GM12878 (cell line): ENCODE measurements at regions of chr1 and their contacts with region 1.

Region 1: GRCh38 chr1:212814537-212815334 is 23.0 kb downstream of the TATDN3 start:
- DNase-seq: no peak
- ATAC-seq: no peak
- H3K4me3 ChIP-seq: no peak overlapping the region
- H3K27ac ChIP-seq: no peak overlapping the region
- H3K4me1 ChIP-seq: no peaks in the 10 kb centered on the region; the same call in 1 of the 2 replicates
- H3K27me3 ChIP-seq: no peaks in the 10 kb centered on the region
- CTCF ChIP-seq: peak; percentile 30 to 44 (median 36); a peak in 4 of 6 replicates
- EP300 ChIP-seq: no peak
- POLR2A ChIP-seq: no peak
- RAD21 ChIP-seq: peak; percentile 60

Region 2: DNA sequence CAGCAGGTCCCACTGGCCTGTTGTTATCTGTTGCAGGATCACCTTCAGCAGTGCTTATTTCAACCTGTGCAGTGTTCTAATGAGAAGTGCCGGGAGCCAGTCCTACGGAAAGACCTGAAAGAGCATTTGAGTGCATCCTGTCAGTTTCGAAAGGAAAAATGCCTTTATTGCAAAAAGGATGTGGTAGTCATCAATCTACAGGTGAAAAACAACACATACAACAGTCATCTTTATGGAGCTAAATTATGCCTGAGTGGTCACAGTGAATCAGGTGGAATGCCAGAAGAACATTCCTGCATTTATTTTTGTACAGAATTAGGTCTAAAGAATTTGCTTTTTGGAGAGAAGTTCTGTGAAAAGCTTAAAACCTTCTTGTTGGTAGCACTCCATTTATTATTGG is 1454.9 kb before region 1 on chr1:
- CTCF ChIA-PET with region 1: no interaction called
- POLR2A ChIA-PET with region 1: no interaction called
- RAD21 ChIA-PET with region 1: no interaction called
- SMC1A ChIA-PET with region 1: no interaction called
- in situ Hi-C with region 1: no loop called
- intact Hi-C with region 1: no loop called
- DNase-seq: no peak
- ATAC-seq: no peak
- H3K4me3 ChIP-seq: no peak overlapping the region
- H3K27ac ChIP-seq: no peak overlapping the region
- H3K4me1 ChIP-seq: no peaks in the 10 kb centered on the region
- H3K27me3 ChIP-seq: no peaks in the 10 kb centered on the region
- CTCF ChIP-seq: no peak
- EP300 ChIP-seq: no peak
- POLR2A ChIP-seq: no peak
- RAD21 ChIP-seq: no peak

Region 3: DNA sequence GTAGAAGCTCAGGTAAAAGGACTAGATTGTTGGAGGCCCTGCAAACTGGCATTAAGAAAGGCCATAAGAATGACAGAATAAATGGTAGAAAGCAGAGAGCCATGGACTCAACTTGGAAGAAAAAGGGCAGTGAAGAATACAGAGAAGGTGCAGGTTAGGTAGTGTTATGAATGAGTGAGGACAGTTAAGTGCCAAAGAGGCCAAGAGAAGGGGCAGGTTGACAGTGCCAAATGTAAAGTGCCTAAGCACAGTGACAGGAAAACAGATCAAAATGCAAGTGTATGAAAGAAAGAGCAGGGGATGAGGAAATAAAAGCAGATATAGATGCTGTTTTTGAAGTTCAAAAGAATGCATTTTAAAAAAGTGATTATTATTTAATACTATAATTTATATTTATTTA is 823.0 kb before region 1 on chr1:
- CTCF ChIA-PET with region 1: no interaction called
- POLR2A ChIA-PET with region 1: no interaction called
- RAD21 ChIA-PET with region 1: no interaction called
- SMC1A ChIA-PET with region 1: no interaction called
- in situ Hi-C with region 1: no loop called
- intact Hi-C with region 1: no loop called
- DNase-seq: no peak
- ATAC-seq: no peak
- H3K4me3 ChIP-seq: no peak overlapping the region
- H3K27ac ChIP-seq: no peak overlapping the region
- H3K4me1 ChIP-seq: peaks cover 2% of the 10 kb centered on the region
- H3K27me3 ChIP-seq: no peaks in the 10 kb centered on the region
- CTCF ChIP-seq: no peak
- EP300 ChIP-seq: no peak
- POLR2A ChIP-seq: no peak
- RAD21 ChIP-seq: no peak

Region 4: DNA sequence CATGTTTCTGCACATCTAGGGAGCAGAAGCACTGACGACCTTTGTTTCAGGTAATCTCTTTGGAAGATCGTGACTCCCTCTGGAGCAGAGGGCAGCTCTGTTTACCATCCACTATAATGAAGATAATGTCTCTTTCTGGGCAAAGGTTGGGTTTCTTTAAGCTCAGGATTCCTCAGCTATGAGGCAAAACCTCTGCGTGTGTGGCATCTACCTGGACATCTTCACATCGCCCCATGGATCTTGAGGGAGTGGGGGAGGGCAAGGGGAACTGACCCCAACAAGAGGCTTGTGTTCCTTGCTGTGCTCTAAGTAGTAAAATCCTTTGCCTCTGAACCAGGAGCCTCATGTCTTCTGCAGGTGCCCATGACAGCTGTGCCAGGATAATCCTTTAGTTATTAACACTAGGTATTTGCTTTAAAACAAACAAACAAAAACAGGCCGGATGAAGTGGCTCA is 13.1 kb after region 1 on chr1:
- CTCF ChIA-PET with region 1: interaction called, 10 read pairs
- POLR2A ChIA-PET with region 1: interaction called, 24 read pairs
- RAD21 ChIA-PET with region 1: interaction called, 35 read pairs
- SMC1A ChIA-PET with region 1: interaction called, 55 read pairs
- in situ Hi-C with region 1: no loop called
- intact Hi-C with region 1: no loop called
- DNase-seq: no peak
- ATAC-seq: no peak
- H3K4me3 ChIP-seq: no peak overlapping the region
- H3K27ac ChIP-seq: no peak overlapping the region
- H3K4me1 ChIP-seq: peaks cover 7% of the 10 kb centered on the region
- H3K27me3 ChIP-seq: no peaks in the 10 kb centered on the region
- CTCF ChIP-seq: no peak
- EP300 ChIP-seq: no peak
- POLR2A ChIP-seq: no peak
- RAD21 ChIP-seq: no peak

Region 5: DNA sequence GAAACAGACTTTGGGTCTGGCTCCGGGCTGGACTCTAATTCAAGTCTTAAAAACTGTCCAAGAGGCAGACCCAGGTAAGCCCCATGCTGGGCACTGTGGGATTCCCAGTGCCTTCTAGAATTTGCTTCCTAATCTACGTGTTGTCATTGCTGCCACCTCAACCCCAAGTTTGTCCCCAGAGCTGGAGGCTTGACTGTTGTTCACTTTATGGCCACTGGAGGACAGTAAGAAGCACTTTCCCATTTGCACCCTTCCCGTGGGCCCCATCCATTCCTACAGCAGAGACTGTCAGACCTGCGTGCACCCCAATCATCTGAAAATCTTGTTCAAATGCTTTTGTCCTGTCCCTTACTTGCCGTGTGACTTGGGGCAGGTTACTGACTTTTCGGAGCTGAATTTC is 106.2 kb after region 1 on chr1:
- CTCF ChIA-PET with region 1: interaction called, 9 read pairs
- POLR2A ChIA-PET with region 1: no interaction called
- RAD21 ChIA-PET with region 1: interaction called, 4 read pairs
- SMC1A ChIA-PET with region 1: interaction called, 6 read pairs
- in situ Hi-C with region 1: no loop called
- intact Hi-C with region 1: loop called (anchors 5 kb)
- DNase-seq: no peak
- ATAC-seq: peak; percentile 51
- H3K4me3 ChIP-seq: no peak overlapping the region
- H3K27ac ChIP-seq: no peak overlapping the region
- H3K4me1 ChIP-seq: peaks cover 20% of the 10 kb centered on the region
- H3K27me3 ChIP-seq: no peaks in the 10 kb centered on the region
- CTCF ChIP-seq: peak; percentile 45 to 67 (median 57); a peak in 5 of 6 replicates
- EP300 ChIP-seq: no peak
- POLR2A ChIP-seq: no peak
- RAD21 ChIP-seq: peak; percentile 71

Region 6: DNA sequence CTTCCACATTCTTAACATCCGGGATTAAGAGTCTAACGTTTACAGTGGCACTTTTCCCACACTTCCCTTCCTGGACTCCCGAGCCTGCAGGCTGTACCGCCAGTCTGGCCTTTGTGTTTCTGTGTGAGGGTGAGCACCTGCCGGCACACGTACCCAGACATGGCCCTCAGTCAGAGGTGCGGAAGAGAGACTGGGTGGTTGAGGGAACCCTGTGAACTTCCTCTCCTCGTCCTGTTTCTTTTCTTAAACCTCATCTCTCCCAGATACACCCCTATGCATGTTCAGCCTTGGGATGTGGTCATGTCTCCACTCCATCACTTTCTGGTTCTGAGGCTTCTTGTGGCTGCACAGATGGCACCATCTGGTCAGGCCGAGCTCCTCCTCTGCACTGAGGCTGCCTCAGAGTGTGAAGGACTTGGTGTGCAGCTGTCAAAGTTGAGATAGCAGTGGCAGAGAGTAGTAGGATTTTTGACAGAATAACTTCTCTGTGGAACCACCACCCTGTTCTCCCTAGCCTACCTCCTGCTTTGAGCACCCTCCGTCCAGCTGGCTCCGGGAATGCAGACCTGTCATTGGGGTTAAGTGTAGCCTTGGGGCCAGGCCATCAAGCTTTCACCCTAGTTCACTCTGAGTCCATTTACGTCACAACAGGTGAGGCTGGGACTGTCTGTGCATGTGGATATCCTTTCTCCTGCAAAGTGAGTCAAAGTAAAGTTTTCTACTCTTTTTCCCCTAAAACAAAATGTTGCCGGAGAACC is 167.0 kb after region 1 on chr1:
- CTCF ChIA-PET with region 1: interaction called, 19 read pairs
- POLR2A ChIA-PET with region 1: interaction called, 6 read pairs
- RAD21 ChIA-PET with region 1: interaction called, 8 read pairs
- SMC1A ChIA-PET with region 1: interaction called, 8 read pairs
- in situ Hi-C with region 1: no loop called
- intact Hi-C with region 1: no loop called
- DNase-seq: peak; percentile 93
- ATAC-seq: peak; percentile 47
- H3K4me3 ChIP-seq: no peak overlapping the region
- H3K27ac ChIP-seq: peak overlapping the region; percentile 93
- H3K4me1 ChIP-seq: peaks cover 56% of the 10 kb centered on the region
- H3K27me3 ChIP-seq: no peaks in the 10 kb centered on the region
- CTCF ChIP-seq: no peak
- EP300 ChIP-seq: no peak; a peak in 1 of 4 replicates
- POLR2A ChIP-seq: peak; percentile 65
- RAD21 ChIP-seq: no peak

Region 7: DNA sequence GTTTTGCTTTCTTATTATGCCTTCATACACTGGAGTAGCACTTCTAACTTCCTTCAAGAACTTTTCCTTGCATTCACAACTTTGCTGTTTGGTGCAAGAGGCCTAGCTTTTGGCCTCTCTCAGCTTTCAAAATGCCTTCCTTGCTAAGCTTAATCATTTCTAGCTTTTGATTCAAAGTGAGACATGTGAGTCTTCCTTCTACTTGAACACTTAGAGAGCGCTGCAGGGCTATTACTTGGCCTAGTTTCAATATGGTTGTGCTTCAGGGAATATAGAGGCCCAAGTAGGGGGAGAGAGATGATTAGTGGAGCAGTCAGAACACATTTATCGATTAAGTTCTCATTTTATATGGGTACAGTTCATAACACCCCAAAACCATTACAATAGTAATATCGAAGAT is 188.5 kb after region 1 on chr1:
- CTCF ChIA-PET with region 1: interaction called, 105 read pairs
- POLR2A ChIA-PET with region 1: no interaction called
- RAD21 ChIA-PET with region 1: interaction called, 60 read pairs
- SMC1A ChIA-PET with region 1: interaction called, 24 read pairs
- in situ Hi-C with region 1: loop called (anchors 5 kb)
- intact Hi-C with region 1: no loop called
- DNase-seq: no peak
- ATAC-seq: peak; percentile 88
- H3K4me3 ChIP-seq: no peak overlapping the region
- H3K27ac ChIP-seq: peak overlapping the region; percentile 22; the same call in 1 of the 2 replicates
- H3K4me1 ChIP-seq: no peaks in the 10 kb centered on the region
- H3K27me3 ChIP-seq: no peaks in the 10 kb centered on the region
- CTCF ChIP-seq: no peak
- EP300 ChIP-seq: no peak
- POLR2A ChIP-seq: no peak
- RAD21 ChIP-seq: no peak